CD14-positive monocyte (primary cell): ENCODE measurements at regions of chr5 and their contacts with region 1.

Region 1: DNA sequence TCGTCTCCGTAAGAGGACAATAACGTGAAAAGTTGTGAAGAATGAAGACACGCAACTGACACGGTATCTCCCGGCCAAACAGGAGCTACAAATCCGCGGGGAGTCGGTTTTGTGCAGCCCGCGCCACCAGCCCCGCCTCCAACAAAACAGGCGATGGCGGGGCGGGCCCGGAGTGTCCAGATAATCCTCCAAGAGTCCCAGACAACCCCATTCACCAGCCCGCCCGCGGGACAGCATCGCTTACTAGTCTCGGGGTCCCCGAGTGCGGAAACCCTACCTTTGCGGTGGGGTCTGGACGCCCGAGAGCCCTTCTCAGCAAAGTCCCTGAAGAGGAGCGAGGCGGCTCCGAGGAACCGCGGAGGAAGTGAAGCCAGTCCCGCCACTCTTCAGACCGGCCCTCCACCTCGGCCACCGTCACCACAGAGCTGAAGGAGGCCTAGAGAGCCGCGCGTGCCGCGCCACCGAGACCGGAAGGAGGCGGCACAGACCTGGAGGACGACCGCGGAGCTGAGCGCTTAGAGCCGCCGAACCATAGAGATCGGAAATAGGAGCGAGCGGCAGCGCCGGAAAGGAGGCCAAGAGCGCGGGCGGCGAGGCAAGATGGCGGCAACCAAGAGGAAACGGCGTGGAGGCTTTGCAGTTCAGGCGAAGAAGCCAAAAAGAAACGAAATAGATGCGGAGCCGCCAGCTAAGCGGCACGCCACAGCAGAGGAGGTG is at the starts of genes BRIX1 and RAD1:
- DNase-seq: peak; percentile 92 to 95 (median 94)
- H3K4me3 ChIP-seq: peak within 1 kb of the TSS; percentile 87 to 96 (median 94)
- H3K4me3 Mint-ChIP-seq: no peak within 1 kb of the TSS
- H3K27ac ChIP-seq: peak within 1 kb of the TSS; percentile 69 to 86
- H3K27ac Mint-ChIP-seq: no peak within 1 kb of the TSS
- H3K4me1 ChIP-seq: peaks cover 15 to 19% of the 10 kb centered on the region in 2 donors
- H3K4me1 Mint-ChIP-seq: peaks cover 17% of the 10 kb centered on the region
- H3K27me3 ChIP-seq: no peaks in the 10 kb centered on the region
- H3K27me3 Mint-ChIP-seq: no peaks in the 10 kb centered on the region
- CTCF ChIP-seq: no peak
- polyA plus RNA-seq, gene BRIX1: 3.3 to 13.5 (median 12.5) TPM
- polyA plus RNA-seq, gene RAD1: 8.5 to 9.6 (median 9.4) TPM

Region 2: DNA sequence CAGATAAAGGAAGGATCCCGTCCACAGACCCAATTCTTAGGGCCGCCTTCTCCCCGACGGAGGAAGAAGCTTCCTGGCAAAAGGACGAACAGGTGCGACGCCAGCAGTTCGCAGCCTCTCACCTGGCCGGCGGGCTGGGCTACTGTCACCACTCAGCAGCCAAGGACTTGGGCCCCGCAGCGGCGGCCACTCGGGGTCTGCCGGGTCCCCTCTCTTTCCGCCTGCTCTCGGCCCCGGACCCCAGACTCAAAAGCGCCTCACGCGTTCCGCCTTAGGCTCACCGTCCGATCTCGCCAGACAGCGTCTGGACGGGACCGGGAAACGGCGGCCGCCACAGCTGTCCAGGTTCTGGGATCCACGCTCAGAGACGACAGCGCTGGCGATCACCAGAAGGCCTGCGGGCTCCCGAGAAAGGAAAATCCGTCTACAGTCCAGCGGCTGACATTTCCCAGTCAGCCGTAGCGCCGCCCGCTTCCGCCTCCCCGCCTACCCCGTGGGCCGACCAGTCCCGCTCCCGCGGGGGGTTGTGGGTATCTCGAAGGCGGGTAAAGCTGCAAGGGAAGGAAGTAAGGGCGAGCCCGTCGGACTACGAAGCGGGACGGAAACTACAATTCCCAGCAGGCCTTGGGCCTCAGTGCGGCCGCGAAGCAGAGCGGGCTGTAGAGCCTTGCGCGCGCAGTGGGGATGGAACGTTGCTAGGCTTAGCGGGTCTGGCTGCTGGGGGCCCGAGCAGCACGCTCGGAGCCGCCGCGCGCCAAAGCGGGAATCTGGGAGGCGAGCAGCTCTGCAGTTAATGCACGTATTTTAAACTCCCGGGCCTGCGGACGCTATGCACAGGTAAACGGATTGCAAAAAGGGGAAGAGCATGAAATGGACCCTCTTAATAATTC is 1236.4 kb after region 1 on chr5 and contains the starts of genes LMBRD2 and SKP2:
- intact Hi-C with region 1: loop called in 1 of 2 experiments (anchors 5 kb)
- DNase-seq: peak; percentile 92 to 96 (median 94)
- H3K4me3 ChIP-seq: peak within 1 kb of the TSS; percentile 88 to 100 (median 92)
- H3K4me3 Mint-ChIP-seq: peak within 1 kb of the TSS; percentile 93 to 96
- H3K27ac ChIP-seq: peak within 1 kb of the TSS; percentile 46 to 86
- H3K27ac Mint-ChIP-seq: peak within 1 kb of the TSS; percentile 85 to 94 (median 91)
- H3K4me1 ChIP-seq: peaks cover 19 to 29% of the 10 kb centered on the region in 2 donors
- H3K4me1 Mint-ChIP-seq: peaks cover 34% of the 10 kb centered on the region
- H3K27me3 ChIP-seq: no peaks in the 10 kb centered on the region
- H3K27me3 Mint-ChIP-seq: no peaks in the 10 kb centered on the region
- CTCF ChIP-seq: no peak
- polyA plus RNA-seq, gene LMBRD2: 2.1 to 6.4 (median 2.3) TPM
- polyA plus RNA-seq, gene SKP2: 14.4 to 18.0 (median 15.5) TPM

Region 3: DNA sequence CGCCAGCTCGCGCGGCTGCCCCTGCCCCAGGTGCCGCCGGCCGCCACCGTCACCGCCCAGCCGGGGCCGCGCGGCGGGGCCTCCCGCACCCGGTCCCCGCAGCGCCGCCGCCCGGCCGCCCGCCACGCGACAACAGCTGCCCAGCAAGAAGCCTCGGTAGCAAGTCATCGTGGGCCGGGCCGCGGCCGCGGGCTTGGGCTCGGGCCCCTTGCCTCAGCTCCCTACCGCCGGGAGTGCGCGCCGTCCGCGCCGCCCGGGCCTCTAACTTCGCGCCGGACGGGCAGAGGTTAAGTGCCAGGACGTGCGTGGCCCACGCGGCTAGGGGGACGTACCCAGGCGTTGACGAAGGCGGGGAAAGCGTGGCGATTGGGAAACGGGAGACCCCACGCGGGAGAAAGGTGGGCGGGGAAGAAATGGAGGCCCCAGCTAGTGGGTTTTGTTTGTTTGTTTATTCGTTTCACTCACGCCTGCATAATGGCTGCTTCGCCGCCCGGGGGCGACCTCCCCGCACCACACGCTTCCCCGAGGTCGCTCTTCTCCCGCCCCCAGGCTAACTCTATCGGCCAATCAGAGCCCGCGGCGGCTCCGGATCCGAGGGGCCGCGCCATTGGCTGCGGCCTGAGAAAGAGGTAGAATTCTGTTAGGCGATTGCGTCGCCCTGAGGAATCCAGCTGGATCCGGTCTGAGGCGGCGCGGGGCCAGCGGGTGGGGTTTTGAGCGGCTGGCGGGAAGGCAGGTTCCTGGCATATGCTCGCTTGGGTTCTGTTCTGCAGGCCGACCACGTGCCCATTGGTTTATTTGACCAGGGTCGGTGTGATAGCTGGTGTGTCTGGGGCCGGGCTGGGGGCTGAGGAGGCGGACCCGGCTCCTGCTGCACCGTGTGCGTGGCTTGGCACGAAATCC is 1326.6 kb after region 1 on chr5 and contains the start of gene NADK2:
- intact Hi-C with region 1: loop called in 1 of 2 experiments (anchors 10 kb)
- DNase-seq: peak; percentile 92 to 94 (median 94)
- H3K4me3 ChIP-seq: peak within 1 kb of the TSS; percentile 59 to 89 (median 75)
- H3K4me3 Mint-ChIP-seq: peak within 1 kb of the TSS; percentile 89 to 95
- H3K27ac ChIP-seq: peak within 1 kb of the TSS; percentile 78 to 85
- H3K27ac Mint-ChIP-seq: peak within 1 kb of the TSS; percentile 82 to 96 (median 89)
- H3K4me1 ChIP-seq: peaks cover 13 to 26% of the 10 kb centered on the region in 2 donors
- H3K4me1 Mint-ChIP-seq: peaks cover 28% of the 10 kb centered on the region
- H3K27me3 ChIP-seq: no peaks in the 10 kb centered on the region
- H3K27me3 Mint-ChIP-seq: peaks cover 0 to 4% (median 2%) of the 10 kb centered on the region in 3 donors
- CTCF ChIP-seq: peak; percentile 68
- polyA plus RNA-seq, gene NADK2: 2.6 to 5.9 (median 3.3) TPM